ENCODE measurements at regions of chr9 and their contacts with region 1.

Region 1: DNA sequence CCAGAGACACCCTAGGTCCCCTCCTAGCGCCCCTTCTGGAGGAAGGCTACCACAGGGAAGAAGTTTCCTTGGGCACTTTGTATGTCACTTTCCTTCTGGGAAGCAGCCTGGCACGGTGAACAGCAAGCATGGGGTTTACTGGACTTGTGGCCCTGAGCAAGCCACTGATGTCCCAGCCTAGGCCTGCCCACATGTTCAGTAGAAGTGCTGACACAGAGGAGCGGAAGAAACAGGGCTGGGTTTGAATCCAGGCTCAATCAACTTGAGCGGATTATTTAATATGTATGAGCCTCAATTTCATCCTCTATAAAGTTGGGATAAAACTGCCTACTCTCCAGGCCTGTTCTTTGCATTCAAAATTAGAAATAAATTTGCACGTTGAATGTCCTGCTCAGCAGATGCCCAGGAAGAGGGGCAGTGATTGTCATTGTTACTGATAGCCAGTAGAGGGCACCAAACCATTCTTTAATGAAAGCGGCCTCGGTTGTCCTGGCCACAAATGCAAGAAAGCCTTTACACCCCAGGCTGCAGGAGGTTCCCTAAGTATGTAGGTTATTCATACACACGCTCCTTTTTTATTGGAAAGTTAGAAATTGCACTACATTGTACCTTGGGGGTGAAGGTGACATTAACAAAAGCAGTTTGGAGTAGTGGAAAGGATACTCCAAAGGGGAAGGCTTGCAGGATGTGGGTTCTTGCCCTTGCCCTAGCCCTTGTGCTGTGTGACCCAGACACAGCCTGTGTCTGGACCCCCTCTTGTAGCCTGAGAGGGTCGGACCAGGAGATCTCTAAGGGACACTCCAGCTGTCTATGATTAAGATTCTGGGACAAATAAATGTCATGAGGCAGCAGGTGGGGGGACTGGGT is 13.4 kb upstream of the XPA start:
- DNase-seq: peak; percentile 87
- H3K4me3 Mint-ChIP-seq: peak overlapping the region; percentile 31
- H3K27ac Mint-ChIP-seq: no peak overlapping the region
- H3K4me1 Mint-ChIP-seq: peaks cover 27% of the 10 kb centered on the region
- H3K27me3 Mint-ChIP-seq: peaks cover 26% of the 10 kb centered on the region

Region 2: GRCh38 chr9:97747201-97747965 is 36.8 kb after region 1 on chr9:
- intact Hi-C with region 1: no loop called
- DNase-seq: no peak
- H3K4me3 Mint-ChIP-seq: no peak overlapping the region
- H3K27ac Mint-ChIP-seq: no peak overlapping the region
- H3K4me1 Mint-ChIP-seq: no peaks in the 10 kb centered on the region
- H3K27me3 Mint-ChIP-seq: peaks cover 51% of the 10 kb centered on the region

Region 3: GRCh38 chr9:97803167-97804058 is 92.8 kb after region 1 on chr9:
- intact Hi-C with region 1: loop called (anchors 5 kb)
- DNase-seq: peak; percentile 92
- H3K4me3 Mint-ChIP-seq: peak overlapping the region; percentile 88
- H3K27ac Mint-ChIP-seq: peak overlapping the region; percentile 68
- H3K4me1 Mint-ChIP-seq: peaks cover 8% of the 10 kb centered on the region
- H3K27me3 Mint-ChIP-seq: peaks cover 40% of the 10 kb centered on the region

Region 4: DNA sequence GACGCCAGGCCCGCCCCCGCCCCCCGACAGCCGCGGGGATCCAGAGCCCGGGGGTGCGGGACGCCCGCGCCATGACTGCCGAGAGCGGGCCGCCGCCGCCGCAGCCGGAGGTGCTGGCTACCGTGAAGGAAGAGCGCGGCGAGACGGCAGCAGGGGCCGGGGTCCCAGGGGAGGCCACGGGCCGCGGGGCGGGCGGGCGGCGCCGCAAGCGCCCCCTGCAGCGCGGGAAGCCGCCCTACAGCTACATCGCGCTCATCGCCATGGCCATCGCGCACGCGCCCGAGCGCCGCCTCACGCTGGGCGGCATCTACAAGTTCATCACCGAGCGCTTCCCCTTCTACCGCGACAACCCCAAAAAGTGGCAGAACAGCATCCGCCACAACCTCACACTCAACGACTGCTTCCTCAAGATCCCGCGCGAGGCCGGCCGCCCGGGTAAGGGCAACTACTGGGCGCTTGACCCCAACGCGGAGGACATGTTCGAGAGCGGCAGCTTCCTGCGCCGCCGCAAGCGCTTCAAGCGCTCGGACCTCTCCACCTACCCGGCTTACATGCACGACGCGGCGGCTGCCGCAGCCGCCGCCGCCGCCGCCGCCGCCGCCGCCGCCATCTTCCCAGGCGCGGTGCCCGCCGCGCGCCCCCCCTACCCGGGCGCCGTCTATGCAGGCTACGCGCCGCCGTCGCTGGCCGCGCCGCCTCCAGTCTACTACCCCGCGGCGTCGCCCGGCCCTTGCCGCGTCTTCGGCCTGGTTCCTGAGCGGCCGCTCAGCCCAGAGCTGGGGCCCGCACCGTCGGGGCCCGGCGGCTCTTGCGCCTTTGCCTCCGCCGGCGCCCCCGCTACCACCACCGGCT is 143.5 kb after region 1 on chr9:
- intact Hi-C with region 1: loop called (anchors 1 kb)
- DNase-seq: peak; percentile 88
- H3K4me3 Mint-ChIP-seq: peak overlapping the region; percentile 90
- H3K27ac Mint-ChIP-seq: peak overlapping the region; percentile 56
- H3K4me1 Mint-ChIP-seq: peaks cover 17% of the 10 kb centered on the region
- H3K27me3 Mint-ChIP-seq: peaks cover 75% of the 10 kb centered on the region

Region 5: DNA sequence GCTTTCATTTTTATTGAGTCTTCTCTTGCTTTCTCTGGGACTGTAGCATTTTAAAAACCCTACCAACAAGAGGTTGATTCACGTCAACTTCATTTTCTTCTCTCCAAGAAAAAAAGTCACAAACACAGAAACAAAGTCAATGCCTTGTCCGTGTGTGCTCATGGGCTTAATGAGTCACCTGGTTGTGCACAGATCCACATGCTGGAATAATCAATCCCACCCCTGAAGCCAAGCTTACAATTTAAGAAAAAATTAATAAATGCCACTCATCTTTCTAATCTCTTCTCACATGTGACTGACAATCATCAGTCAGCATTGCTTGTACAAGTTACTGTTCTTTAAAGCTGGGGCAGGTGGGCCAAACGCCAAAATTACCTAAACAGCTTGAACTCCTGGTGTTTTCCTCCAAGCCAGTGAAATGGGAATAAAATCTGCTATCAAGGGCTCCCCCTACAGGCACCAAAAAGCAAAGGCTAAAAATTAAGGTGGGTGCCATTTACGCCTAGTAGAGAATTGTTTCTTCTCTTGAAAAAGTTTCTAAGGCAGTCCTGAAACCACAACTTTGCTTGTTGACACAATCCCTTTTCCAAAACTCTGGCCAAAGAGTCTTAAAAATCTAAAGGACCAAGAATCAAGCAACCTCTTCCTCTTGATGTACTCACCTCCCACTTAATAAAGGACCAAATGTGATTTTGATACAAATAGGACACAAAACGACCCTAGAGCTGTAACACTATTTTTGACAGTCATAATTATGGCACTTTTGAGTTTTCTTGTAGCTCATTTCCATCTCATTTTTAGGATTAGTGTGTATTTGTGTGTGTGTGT is 190.4 kb after region 1 on chr9:
- intact Hi-C with region 1: loop called (anchors 1 kb)
- DNase-seq: peak; percentile 76
- H3K4me3 Mint-ChIP-seq: no peak overlapping the region
- H3K27ac Mint-ChIP-seq: no peak overlapping the region
- H3K4me1 Mint-ChIP-seq: peaks cover 33% of the 10 kb centered on the region
- H3K27me3 Mint-ChIP-seq: no peaks in the 10 kb centered on the region

Region 6: DNA sequence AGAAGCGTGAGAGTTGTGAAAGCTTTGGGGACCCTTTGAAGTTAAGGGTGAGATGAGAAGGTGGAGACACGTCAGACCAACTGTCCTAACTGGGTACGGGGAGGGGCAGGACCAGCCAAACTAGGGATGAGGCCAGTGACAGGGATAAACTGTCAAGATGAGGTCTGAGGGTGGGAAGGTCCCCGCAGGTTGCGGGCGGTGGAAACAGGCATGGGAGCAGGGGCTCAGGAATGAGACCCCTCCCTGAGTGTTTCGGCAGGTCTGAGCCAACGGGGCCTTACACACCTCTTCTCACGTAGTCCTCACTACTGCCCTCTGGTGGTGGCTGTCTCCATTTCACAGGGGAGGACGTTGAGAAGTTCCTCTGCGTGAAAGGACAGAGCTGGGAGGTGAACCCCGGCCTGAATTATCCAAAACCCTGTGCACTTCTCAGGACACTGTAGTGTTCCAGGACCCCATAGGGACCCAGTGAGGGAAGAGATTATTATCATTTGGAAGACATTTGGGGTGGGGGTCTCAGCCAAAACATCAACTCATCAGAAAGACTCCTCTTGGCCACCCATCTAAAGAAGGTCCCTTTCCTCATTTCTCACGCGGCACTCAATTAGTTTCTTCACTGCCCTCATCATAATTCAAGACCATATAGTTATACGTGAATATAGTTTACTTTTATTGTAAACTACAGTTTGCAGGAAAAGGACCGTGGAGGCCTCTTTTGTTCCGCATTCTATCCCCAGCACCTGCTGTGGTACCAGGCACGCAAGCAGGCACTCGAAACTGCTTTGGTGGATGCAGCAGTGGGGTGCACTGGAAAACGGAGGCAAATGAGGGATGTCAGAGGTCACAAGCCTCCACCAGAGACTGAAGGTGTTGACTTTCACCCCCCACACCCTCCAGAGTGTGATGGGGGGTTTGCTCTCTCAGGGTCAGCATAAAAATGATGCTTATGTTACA is 324.3 kb after region 1 on chr9:
- intact Hi-C with region 1: loop called (anchors 2 kb)
- DNase-seq: peak; percentile 96
- H3K4me3 Mint-ChIP-seq: peak overlapping the region; percentile 22
- H3K27ac Mint-ChIP-seq: no peak overlapping the region
- H3K4me1 Mint-ChIP-seq: peaks cover 15% of the 10 kb centered on the region
- H3K27me3 Mint-ChIP-seq: no peaks in the 10 kb centered on the region

Region 7: GRCh38 chr9:98263482-98264357 is 553.1 kb after region 1 on chr9:
- intact Hi-C with region 1: loop called (anchors 5 kb)
- DNase-seq: peak; percentile 95
- H3K4me3 Mint-ChIP-seq: no peak overlapping the region
- H3K27ac Mint-ChIP-seq: no peak overlapping the region
- H3K4me1 Mint-ChIP-seq: peaks cover 2% of the 10 kb centered on the region
- H3K27me3 Mint-ChIP-seq: peaks cover 23% of the 10 kb centered on the region

Measured in activated CD4-positive, alpha-beta T cell treated with anti-CD3 and anti-CD28 coated beads, Interleukin-2, amount 10 ng/mL, durations not matched to agents 24 days and 14 days (primary cell).